Transverse colon (tissue), 4 donors: ENCODE measurements at regions of chr12 and their contacts with region 1.

Region 1: DNA sequence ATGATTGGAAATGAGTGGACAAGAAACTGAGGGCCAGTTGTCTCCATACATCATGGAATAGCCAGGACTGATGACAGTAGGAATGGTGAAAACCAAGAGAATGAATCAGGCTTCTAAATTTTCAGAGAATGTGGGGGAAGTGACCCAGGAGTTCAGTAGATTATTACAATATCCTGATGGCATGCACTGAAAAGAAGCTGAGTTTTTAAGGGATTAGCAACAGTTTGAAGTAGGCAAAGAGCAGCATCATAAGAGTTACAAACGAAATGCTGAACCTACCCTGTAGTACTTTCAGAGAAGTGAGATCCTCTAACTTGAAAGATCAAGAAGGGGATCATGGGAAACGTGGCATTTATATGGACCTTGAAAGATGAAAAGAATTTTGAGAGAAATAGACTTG is 13.2 kb downstream of the SLC2A14 start:
- DNase-seq: no peak
- H3K4me3 ChIP-seq: no peak overlapping the region
- H3K27ac ChIP-seq: peak overlapping the region in 1 of 4 donors; percentile 78
- H3K4me1 ChIP-seq: peaks cover 0 to 4% (median 1%) of the 10 kb centered on the region in 4 donors
- H3K27me3 ChIP-seq: no peaks in the 10 kb centered on the region
- CTCF ChIP-seq: no peak
- EP300 ChIP-seq: no peak
- POLR2A ChIP-seq: no peak

Region 2: DNA sequence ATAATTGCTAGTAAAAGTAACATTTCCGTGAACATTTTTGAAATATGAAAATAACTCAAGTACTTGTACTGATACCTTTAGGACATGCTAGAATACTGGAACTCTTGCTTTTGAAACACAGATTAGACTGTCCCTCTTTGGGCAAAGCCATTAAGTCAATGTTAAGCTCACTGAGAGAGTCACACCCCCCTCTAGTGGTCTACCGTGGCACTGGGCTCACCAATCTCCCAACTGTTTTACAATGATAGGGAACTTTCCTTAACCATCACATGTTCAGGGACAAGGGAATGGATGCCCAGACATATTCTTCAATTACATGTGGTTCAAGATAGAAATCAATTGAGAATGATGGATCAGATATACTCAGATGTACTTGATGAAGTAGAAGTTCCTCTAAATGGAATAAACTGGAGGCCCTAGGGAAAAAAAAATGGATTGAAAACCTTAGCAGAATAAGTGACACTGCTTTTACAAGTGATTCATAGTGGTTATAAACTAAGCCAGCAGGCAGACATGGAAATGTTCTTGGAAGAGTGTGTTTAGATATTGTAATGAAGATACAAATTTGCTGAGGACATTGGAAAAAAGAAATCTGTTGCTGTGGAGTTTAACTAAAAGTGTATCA is 52.6 kb before region 1 on chr12:
- in situ Hi-C with region 1: no loop called
- intact Hi-C with region 1: no loop called
- DNase-seq: peak; percentile 59
- H3K4me3 ChIP-seq: no peak overlapping the region
- H3K27ac ChIP-seq: no peak overlapping the region
- H3K4me1 ChIP-seq: no peaks in the 10 kb centered on the region
- H3K27me3 ChIP-seq: no peaks in the 10 kb centered on the region
- CTCF ChIP-seq: peak; percentile 26 to 77 (median 66)
- EP300 ChIP-seq: no peak
- POLR2A ChIP-seq: no peak

Region 3: DNA sequence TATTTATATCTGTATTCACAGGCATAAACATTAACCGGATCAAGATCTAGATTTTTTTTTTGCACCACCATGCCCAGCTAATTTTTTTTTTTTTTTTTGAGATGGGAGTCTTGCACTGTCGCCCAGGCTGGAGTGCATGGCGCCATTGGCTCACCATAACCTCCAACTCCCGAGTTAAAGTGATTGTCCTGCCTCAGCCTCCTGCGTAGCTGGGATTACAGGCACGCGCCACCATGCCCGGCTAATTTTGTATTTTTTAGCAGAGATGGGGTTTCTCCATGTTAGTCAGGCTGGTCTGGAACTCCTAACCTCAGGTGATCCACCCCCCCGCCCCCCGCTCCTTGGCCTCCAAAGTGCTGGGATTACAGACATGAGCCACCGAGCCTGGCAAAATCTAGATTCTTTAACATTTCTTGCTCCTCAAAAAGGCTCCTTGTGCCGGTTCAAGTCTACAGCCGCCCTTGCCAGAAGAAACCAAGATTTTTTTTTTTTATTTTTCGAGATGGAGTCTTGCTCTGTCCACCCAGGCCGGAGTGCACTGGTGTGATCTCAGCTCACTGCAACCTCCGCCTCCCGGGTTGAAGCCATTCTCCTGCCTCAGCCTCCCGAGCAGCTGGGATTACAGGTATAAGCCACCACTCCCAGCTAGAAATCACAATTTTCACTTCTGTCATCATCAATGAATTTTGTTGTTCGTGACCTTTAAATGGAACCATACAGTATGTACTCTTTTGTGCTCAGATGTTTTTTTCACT is 113.4 kb after region 1 on chr12:
- in situ Hi-C with region 1: no loop called
- intact Hi-C with region 1: loop called (anchors 1 kb)
- DNase-seq: no peak
- H3K4me3 ChIP-seq: no peak overlapping the region
- H3K27ac ChIP-seq: peak overlapping the region in 2 of 4 donors; percentile 8 to 48
- H3K4me1 ChIP-seq: peaks cover 0 to 16% (median 7%) of the 10 kb centered on the region in 4 donors
- H3K27me3 ChIP-seq: peaks cover 17% of the 10 kb centered on the region
- CTCF ChIP-seq: no peak
- EP300 ChIP-seq: no peak
- POLR2A ChIP-seq: no peak

Region 4: DNA sequence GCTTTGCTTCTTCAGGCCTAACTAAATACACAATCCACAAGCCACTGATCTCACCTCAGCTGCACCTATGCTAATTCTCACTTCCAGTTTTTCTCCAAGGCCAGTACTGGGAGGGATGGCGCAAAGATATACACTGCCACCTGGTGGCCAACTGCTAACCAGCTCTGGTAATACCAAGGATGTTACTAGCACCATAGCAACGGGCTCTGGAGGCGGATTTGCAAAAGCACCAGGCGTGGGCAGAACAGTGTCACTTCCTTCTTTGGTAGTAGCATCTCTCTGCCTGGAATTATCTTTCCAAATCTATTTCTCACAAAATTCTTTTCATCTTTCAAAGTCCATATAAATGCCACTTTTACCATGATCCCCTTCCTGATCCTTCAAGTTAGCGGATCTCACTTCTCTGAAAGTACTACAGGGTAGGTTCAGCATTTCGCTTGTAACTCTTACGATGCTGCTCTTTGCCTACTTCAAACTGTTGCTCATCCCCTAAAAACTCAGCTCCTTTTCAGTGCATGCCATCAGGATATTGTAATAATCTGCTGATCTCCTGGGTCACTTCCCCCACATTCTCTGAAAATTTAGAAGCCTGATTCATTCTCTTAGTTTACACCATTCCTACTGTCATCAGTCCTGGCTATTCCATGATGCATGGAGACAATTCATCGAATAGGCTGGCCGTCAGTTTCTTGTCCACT is 135.9 kb after region 1 on chr12:
- in situ Hi-C with region 1: loop called (anchors 5 to 25 kb)
- intact Hi-C with region 1: loop called (anchors 5 kb)
- DNase-seq: peak; percentile 77
- H3K4me3 ChIP-seq: no peak overlapping the region
- H3K27ac ChIP-seq: peak overlapping the region; percentile 21 to 60 (median 56)
- H3K4me1 ChIP-seq: peaks cover 0 to 3% (median 0%) of the 10 kb centered on the region in 4 donors
- H3K27me3 ChIP-seq: no peaks in the 10 kb centered on the region
- CTCF ChIP-seq: peak; percentile 82 to 88 (median 85)
- EP300 ChIP-seq: no peak
- POLR2A ChIP-seq: no peak

Region 5: DNA sequence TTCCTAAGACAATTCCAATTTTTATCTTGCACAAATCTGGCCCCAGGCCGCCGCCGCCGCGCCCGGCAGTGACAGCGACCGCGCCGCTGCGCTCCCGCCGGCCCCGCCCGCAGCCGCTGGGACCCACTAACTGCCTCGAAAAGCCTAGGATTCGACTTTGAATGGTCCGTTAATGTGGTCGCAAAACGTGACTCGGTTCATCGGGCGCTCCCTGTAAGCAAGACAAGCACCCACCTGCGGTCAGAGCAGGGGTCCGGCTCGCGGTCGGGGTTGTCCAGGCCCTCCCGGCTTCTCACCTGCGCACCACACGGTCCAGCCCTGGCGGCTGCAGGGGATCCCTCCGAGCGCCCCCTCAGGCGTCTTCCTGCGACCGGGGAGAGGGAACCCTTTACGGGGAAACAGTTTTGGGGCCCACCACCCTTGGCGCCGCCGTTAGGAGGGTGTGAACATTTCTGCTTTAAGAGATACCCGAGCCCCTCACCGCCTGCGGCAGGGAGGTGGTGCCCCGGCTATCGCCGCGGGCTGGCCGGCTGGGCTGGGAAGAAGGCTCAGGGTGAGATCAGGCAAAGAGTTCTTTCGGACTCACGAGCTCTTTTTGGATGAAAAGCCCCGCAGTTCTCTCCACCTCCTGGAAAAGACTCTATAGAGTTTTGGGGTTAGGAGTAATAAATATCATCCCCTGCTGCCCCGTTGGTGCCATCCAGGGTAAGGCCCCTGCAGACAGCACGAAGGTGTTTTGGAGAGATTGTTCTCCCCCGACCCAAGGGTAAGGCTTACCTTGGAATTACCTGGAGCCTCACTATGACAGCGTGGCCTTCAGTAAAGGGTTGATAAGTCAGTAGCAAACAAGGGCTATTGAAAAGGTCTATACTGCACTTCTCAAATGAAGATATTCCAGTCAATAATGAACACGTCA is 159.4 kb after region 1 on chr12:
- in situ Hi-C with region 1: loop called in 1 of 4 experiments (anchors 25 kb)
- intact Hi-C with region 1: no loop called
- DNase-seq: no peak
- H3K4me3 ChIP-seq: peak overlapping the region in 2 of 4 donors; percentile 23 to 44
- H3K27ac ChIP-seq: no peak overlapping the region
- H3K4me1 ChIP-seq: peaks cover 0 to 13% (median 8%) of the 10 kb centered on the region in 4 donors
- H3K27me3 ChIP-seq: peaks cover 71% of the 10 kb centered on the region
- CTCF ChIP-seq: no peak
- EP300 ChIP-seq: no peak
- POLR2A ChIP-seq: no peak